ENCODE measurements at regions of chr6 and their contacts with region 1.

Region 1: DNA sequence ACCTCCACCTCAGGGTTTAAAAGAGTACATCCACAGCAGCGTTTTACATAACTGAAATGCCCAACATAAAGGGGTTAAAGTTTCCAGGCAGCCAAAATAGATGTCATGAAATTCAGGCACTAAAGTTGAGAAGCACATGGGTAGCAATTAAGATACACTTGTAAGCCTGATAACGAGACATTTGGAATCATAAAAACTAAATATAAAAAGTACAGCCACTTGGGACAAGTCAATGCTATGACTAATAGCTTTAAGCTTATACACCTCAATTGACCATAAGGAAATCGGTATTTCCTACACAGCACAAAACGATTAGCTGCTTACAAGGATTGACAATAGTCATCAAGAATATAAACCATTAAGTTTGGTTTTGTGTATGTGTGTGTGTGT is 11.8 kb downstream of the LOC128125822 start:
- DNase-seq: no peak
- H3K4me3 Mint-ChIP-seq: no peak overlapping the region
- H3K27ac Mint-ChIP-seq: no peak overlapping the region
- H3K4me1 Mint-ChIP-seq: peaks cover 2% of the 10 kb centered on the region
- H3K27me3 Mint-ChIP-seq: peaks cover 4% of the 10 kb centered on the region

Region 2: GRCh38 chr6:63441266-63441956 is 142.7 kb before region 1 on chr6:
- CTCF ChIA-PET with region 1: no interaction called
- POLR2A ChIA-PET with region 1: no interaction called
- DNase-seq: no peak
- H3K4me3 Mint-ChIP-seq: peak overlapping the region; percentile 47
- H3K27ac Mint-ChIP-seq: no peak overlapping the region
- H3K4me1 Mint-ChIP-seq: no peaks in the 10 kb centered on the region
- H3K27me3 Mint-ChIP-seq: no peaks in the 10 kb centered on the region

Region 3: GRCh38 chr6:63573140-63573898 is 10.8 kb before region 1 on chr6:
- CTCF ChIA-PET with region 1: interaction called, 12 read pairs
- POLR2A ChIA-PET with region 1: no interaction called
- DNase-seq: peak; percentile 72
- H3K4me3 Mint-ChIP-seq: peak overlapping the region; percentile 90
- H3K27ac Mint-ChIP-seq: peak overlapping the region; percentile 96
- H3K4me1 Mint-ChIP-seq: peaks cover 35% of the 10 kb centered on the region
- H3K27me3 Mint-ChIP-seq: no peaks in the 10 kb centered on the region